GM10248 (cell line): ENCODE measurements at regions of chr7 and their contacts with region 1.

Region 1: DNA sequence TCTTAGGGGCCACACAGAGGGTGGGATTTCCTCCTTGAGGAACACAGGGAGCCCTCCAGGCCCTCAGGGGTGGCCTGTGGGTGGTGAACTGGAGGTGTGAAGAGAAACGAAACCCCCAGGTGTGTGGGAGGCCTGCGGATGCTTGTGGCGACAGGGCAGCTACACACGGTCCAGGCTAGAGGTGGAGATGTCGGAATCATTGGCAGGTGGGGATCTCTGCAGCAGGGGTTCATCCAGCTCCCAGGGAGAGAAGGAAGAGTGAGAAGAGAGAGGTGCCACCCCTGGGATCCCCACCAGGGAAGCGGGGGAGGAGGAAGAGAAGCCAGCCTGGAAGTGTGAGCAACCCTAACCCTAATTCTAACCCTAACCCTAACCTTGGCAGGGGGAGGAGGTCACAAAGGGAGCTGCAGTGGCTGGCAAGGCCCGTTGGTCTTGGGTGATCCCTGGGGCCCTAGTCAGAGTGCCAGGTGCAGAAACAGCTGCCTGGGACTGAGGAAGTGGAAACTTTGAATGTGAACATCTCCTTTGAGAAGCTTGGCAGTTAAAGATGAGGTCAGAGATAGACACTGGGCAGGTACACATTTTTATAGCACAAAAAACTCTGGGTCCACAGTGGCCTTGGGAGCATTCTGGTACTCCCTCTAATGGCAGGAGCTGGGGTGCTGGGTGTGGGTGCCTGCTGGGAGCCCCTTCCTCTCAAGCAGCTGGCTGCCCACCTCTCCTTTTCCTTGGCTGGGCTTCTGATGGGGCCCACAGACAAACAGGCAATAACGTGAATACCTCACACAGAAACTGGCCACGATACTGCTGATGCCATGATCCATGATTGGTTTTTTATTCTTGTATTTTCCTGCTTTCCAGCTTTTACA is 6.8 kb upstream of the AEBP1 start:
- DNase-seq: peak; percentile 77
- CTCF ChIP-seq: no peak

Region 2: GRCh38 chr7:43337191-43337590 is 760.1 kb before region 1 on chr7:
- CTCF ChIA-PET with region 1: no interaction called
- POLR2A ChIA-PET with region 1: no interaction called
- DNase-seq: no peak
- CTCF ChIP-seq: no peak

Region 3: GRCh38 chr7:44081266-44081748 is 16.0 kb before region 1 on chr7:
- CTCF ChIA-PET with region 1: interaction called, 42 read pairs
- POLR2A ChIA-PET with region 1: no interaction called
- DNase-seq: peak; percentile 59
- CTCF ChIP-seq: peak; percentile 8